ENCODE measurements at regions of chr15 and their contacts with region 1.

Region 1: GRCh38 chr15:55999636-56000035 is 6.2 kb upstream of the NEDD4 start:
- DNase-seq: no peak
- ATAC-seq: no peak
- H3K4me3 ChIP-seq: no peak overlapping the region
- H3K27ac ChIP-seq: no peak overlapping the region
- H3K4me1 ChIP-seq: no peaks in the 10 kb centered on the region
- H3K27me3 ChIP-seq: no peaks in the 10 kb centered on the region
- CTCF ChIP-seq: no peak
- EP300 ChIP-seq: no peak
- POLR2A ChIP-seq: no peak
- RAD21 ChIP-seq: no peak

Region 2: DNA sequence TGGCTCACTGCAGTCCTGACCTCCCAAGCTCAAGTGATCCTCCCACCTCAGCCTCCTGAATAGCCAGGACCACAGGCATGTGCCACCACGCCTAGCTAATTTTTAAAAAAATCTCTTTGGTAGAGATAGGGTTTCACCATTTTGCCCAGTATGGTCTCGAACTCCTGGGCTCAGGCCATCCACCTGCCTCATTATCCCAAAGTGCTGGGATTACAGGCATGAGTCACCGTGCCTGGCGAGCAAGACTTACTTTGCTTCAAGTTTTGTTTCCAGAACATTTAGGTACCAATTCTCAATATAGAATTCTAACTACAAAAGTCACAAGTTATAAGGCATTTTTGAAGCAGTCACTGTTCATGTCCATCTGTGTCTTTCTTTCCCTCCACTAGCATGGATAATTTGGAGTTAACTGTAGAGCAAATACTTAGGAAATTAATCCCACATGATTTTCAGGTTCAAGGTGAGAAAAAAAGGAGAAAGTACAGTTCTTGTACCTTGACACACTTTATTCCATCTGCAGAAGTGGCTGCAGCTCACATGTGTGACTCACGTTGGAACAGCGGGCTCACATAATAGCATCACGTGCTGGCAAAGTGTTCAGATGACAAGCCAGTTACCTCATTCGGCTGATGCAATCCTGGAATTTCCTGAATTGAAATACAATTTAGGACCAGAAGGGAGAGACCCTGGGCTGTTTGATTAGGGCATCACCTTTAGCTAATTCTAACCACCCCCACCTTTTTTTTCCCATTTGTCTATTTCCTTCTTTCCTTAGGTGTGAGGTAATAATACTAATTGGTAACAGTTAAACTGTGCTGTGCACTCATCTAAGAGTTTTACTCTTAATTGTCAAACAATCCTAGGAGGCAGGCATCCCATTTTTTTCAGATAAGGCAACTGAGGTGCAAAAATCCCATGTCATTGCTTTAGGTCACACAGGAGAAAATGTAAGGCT is 40.7 kb after region 1 on chr15:
- CTCF ChIA-PET with region 1: no interaction called
- POLR2A ChIA-PET with region 1: no interaction called
- in situ Hi-C with region 1: no loop called
- intact Hi-C with region 1: loop called (anchors 2 kb)
- DNase-seq: peak; percentile 80
- ATAC-seq: peak; percentile 58
- H3K4me3 ChIP-seq: no peak overlapping the region
- H3K27ac ChIP-seq: peak overlapping the region; percentile 46
- H3K4me1 ChIP-seq: peaks cover 42% of the 10 kb centered on the region
- H3K27me3 ChIP-seq: no peaks in the 10 kb centered on the region
- CTCF ChIP-seq: no peak
- EP300 ChIP-seq: peak; percentile 56 to 83; a peak in 3 of 4 replicates
- POLR2A ChIP-seq: no peak
- RAD21 ChIP-seq: no peak

Measured in HepG2 (cell line).